Heart right ventricle (tissue), 16 donors: ENCODE measurements at regions of chrX and their contacts with region 1.

Region 1: DNA sequence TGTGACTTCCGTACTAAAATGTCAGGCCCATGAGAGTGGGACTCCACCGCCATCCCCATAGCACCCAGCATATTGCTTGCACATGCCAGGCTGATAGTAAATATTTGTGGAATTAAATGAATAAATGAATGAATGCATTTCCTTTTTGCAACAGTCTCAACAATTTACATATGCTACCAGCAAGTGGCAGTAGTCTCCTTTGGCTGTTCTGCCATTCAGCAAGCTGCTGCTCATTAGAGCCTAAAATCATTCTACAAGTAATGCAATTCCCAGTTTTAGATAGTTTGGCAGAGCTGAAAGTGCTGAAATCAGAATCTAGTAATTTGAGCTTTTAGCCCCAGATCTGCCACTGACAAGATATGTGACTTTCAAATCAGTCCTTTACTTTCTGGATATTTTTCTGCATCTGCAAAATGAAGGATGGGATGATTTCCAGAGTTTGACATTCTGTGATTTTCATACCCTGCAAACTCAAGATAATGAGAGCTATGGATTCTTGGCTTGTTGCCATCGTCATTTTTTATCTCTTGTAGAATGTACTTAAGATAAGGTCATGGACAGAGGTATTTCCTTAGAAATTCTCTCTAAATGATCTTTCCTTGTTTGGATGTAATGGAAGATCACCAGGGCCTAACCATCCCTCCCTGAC is 35.7 kb upstream of the INTS6L start:
- DNase-seq: no peak
- ATAC-seq: peak in 1 of 8 donors; percentile 41
- H3K4me3 ChIP-seq: no peak overlapping the region
- H3K27ac ChIP-seq: no peak overlapping the region
- H3K4me1 ChIP-seq: no peaks in the 10 kb centered on the region
- H3K27me3 ChIP-seq: peaks cover 0 to 14% (median 0%) of the 10 kb centered on the region in 7 donors
- CTCF ChIP-seq: peak in 8 of 9 donors; percentile 21 to 73 (median 58)

Region 2: DNA sequence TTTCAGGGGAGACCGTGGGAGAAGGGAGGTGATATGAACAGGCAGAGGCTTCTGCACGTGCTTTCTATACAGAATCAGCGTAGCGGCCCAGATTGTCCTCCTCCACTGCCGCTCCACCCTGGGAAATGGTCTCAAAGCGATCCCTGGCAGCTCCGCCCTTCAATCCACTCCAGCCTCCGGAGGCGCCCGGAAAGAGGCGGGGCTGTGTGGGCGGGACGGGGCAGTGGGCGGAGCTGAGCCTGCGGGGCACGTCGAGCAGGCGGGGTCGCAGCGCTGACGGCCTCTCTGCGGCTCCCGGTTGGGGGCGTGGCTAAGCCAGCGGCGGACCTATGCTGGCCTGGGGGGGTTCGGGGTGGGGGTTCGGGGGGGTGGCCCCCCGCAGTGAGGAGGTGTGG is 63.2 kb before region 1 on chrX:
- intact Hi-C with region 1: no loop called
- DNase-seq: peak; percentile 89
- ATAC-seq: peak; percentile 94 to 98 (median 98)
- H3K4me3 ChIP-seq: peak overlapping the region in 9 of 10 donors; percentile 46 to 59 (median 53)
- H3K27ac ChIP-seq: peak overlapping the region in 5 of 10 donors; percentile 23 to 35 (median 28)
- H3K4me1 ChIP-seq: peaks cover 0 to 5% (median 0%) of the 10 kb centered on the region in 9 donors
- H3K27me3 ChIP-seq: peaks cover 0 to 16% (median 0%) of the 10 kb centered on the region in 7 donors
- CTCF ChIP-seq: no peak

Region 3: GRCh38 chrX:135516376-135516775 is 31.6 kb after region 1 on chrX:
- intact Hi-C with region 1: no loop called
- DNase-seq: no peak
- ATAC-seq: no peak
- H3K4me3 ChIP-seq: no peak overlapping the region
- H3K27ac ChIP-seq: no peak overlapping the region
- H3K4me1 ChIP-seq: peaks cover 0 to 10% (median 0%) of the 10 kb centered on the region in 9 donors
- H3K27me3 ChIP-seq: no peaks in the 10 kb centered on the region
- CTCF ChIP-seq: peak in 1 of 9 donors; percentile 13

Region 4: DNA sequence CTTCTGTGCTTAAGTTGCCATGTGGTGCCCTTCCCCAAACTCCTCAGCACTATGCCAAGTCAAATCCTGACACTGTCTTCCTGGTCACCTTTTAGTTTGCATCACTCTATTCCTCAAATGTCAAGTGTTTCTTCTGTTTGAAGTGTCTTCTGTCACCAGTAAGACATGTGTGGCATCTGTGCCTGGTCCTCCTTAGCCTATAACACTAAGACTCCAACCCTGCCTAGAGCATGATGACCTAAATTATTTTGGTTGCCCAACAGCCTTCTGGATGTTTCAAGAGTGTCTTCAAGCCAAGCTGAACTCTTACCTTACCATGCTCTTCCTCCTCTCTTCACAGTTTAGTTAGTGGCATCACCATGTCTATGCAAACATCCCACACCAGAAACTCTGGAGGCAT is 80.6 kb after region 1 on chrX:
- intact Hi-C with region 1: loop called in 8 of 10 experiments (anchors 5 to 10 kb)
- DNase-seq: no peak
- ATAC-seq: no peak
- H3K4me3 ChIP-seq: no peak overlapping the region
- H3K27ac ChIP-seq: no peak overlapping the region
- H3K4me1 ChIP-seq: no peaks in the 10 kb centered on the region
- H3K27me3 ChIP-seq: peaks cover 0 to 15% (median 0%) of the 10 kb centered on the region in 7 donors
- CTCF ChIP-seq: no peak

Region 5: DNA sequence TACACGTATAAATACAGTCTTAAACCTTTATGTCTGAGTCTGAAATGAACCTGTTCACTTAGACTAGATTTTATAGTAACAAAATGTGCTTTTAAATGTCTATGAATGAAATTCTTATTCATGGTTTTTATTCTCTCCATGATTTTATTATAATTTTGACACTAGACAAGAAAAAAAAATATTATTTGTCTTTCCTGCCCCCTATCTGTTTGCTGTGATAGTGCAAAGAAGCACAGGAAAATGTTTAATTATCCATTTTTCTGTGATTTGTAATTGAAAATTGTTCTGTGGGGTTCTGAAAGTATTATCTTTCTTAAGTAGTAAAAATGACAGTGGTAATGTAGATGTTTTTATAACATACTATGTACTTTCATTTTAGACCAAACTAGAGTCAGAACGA is 87.7 kb after region 1 on chrX:
- intact Hi-C with region 1: loop called in 8 of 10 experiments (anchors 5 to 10 kb)
- DNase-seq: no peak
- ATAC-seq: no peak
- H3K4me3 ChIP-seq: no peak overlapping the region
- H3K27ac ChIP-seq: no peak overlapping the region
- H3K4me1 ChIP-seq: no peaks in the 10 kb centered on the region
- H3K27me3 ChIP-seq: peaks cover 0 to 9% (median 0%) of the 10 kb centered on the region in 7 donors
- CTCF ChIP-seq: peak in 7 of 9 donors; percentile 38 to 56 (median 45)

Region 6: GRCh38 chrX:135625995-135626394 is 141.2 kb after region 1 on chrX:
- intact Hi-C with region 1: no loop called
- DNase-seq: no peak
- ATAC-seq: no peak
- H3K4me3 ChIP-seq: no peak overlapping the region
- H3K27ac ChIP-seq: no peak overlapping the region
- H3K4me1 ChIP-seq: no peaks in the 10 kb centered on the region
- H3K27me3 ChIP-seq: no peaks in the 10 kb centered on the region
- CTCF ChIP-seq: peak in 6 of 9 donors; percentile 16 to 22 (median 18)

Region 7: GRCh38 chrX:135923353-135923752 is 438.6 kb after region 1 on chrX:
- intact Hi-C with region 1: loop called in 1 of 10 experiments (anchors 10 kb)
- DNase-seq: no peak
- ATAC-seq: no peak
- H3K4me3 ChIP-seq: no peak overlapping the region
- H3K27ac ChIP-seq: no peak overlapping the region
- H3K4me1 ChIP-seq: no peaks in the 10 kb centered on the region
- H3K27me3 ChIP-seq: peaks cover 0 to 31% (median 0%) of the 10 kb centered on the region in 7 donors
- CTCF ChIP-seq: peak in 1 of 9 donors; percentile 15

Region 8: GRCh38 chrX:135931644-135932487 is 447.1 kb after region 1 on chrX:
- intact Hi-C with region 1: loop called in 5 of 10 experiments (anchors 10 kb)
- DNase-seq: peak; percentile 13 to 15
- ATAC-seq: peak in 3 of 8 donors; percentile 51 to 67 (median 62)
- H3K4me3 ChIP-seq: no peak overlapping the region
- H3K27ac ChIP-seq: no peak overlapping the region
- H3K4me1 ChIP-seq: no peaks in the 10 kb centered on the region
- H3K27me3 ChIP-seq: peaks cover 0 to 15% (median 0%) of the 10 kb centered on the region in 7 donors
- CTCF ChIP-seq: peak; percentile 19 to 80 (median 63)